ENCODE measurements at regions of chr1 and their contacts with region 1.

Region 1: DNA sequence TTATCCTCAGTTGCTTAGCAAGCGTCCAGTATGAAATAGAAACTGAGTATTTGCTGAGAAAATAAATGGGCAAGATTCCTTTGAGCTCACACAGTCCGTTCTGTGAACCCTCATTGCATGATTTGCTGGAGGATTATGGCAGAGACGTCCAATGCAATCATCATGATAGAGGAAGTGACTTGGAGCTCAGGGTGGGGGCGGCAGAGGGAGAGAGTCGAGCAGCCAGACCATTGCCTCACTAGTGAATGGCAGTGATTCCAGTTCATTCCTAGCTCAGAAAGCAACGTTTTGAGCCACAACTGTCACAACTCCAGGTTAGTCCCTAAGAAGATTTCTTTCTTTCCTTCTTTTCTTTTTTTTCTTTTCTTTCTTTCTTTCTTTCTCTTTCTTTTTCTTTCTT is 27.5 kb upstream of the COL9A2 start:
- DNase-seq: peak; percentile 36
- H3K4me3 ChIP-seq: peak overlapping the region; percentile 23
- H3K27ac ChIP-seq: no peak overlapping the region
- H3K4me1 ChIP-seq: no peaks in the 10 kb centered on the region
- H3K27me3 ChIP-seq: peaks cover 29% of the 10 kb centered on the region
- CTCF ChIP-seq: no peak

Region 2: GRCh38 chr1:40143891-40144575 is 200.6 kb before region 1 on chr1:
- intact Hi-C with region 1: loop called (anchors 5 kb)
- DNase-seq: no peak
- H3K4me3 ChIP-seq: no peak overlapping the region
- H3K27ac ChIP-seq: no peak overlapping the region
- H3K4me1 ChIP-seq: no peaks in the 10 kb centered on the region
- H3K27me3 ChIP-seq: peaks cover 60% of the 10 kb centered on the region
- CTCF ChIP-seq: peak; percentile 85

Region 3: GRCh38 chr1:40232444-40232843 is 112.2 kb before region 1 on chr1:
- intact Hi-C with region 1: no loop called
- DNase-seq: no peak
- H3K4me3 ChIP-seq: no peak overlapping the region
- H3K27ac ChIP-seq: no peak overlapping the region
- H3K4me1 ChIP-seq: no peaks in the 10 kb centered on the region
- H3K27me3 ChIP-seq: no peaks in the 10 kb centered on the region
- CTCF ChIP-seq: no peak

Region 4: GRCh38 chr1:40404670-40405462 is 60.3 kb after region 1 on chr1:
- intact Hi-C with region 1: loop called (anchors 10 kb)
- DNase-seq: no peak
- H3K4me3 ChIP-seq: no peak overlapping the region
- H3K27ac ChIP-seq: no peak overlapping the region
- H3K4me1 ChIP-seq: peaks cover 6% of the 10 kb centered on the region
- H3K27me3 ChIP-seq: no peaks in the 10 kb centered on the region
- CTCF ChIP-seq: peak; percentile 92